WTC11 (cell line): ENCODE measurements at regions of chr16 and their contacts with region 1.

Region 1: DNA sequence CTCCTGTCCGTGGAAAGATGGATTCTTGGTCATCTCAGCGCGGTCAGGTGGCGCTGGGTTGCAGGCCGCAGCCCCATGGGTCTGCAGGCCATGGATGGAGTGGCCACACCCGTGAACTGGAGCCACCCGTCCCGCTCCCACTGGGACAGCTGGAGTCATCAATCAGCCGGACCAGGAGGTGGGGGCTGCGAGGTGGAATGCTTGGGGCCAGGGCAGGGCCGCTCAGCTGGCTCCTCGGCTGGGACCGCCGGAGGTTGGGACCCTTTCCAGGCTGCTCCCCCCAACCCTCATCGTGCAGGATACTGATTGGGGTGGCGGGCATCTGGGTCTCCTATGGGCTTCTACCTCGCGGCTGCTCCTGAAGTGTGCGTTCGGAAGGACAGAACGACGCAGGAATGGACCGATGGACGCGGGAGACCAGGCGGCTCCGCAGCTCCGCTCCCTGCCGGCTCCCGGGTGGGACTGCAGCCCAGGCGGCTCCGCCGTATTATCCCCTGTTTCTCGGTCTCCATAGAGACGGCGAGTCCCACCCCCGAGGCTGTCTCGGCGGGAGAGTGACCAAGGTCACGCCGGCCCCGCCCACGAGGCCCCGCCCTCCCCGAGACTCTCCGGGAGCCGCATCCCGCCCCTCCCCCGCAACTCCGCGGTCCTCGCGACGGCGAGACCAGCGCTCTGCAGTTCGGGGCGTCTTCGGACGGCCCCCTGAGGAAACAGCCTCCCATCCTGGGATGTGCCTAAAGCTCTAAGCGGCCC is at the start of gene TPPP3:
- DNase-seq: peak; percentile 90
- ATAC-seq: peak; percentile 56
- H3K4me3 Mint-ChIP-seq: peak within 1 kb of the TSS; percentile 66
- H3K27ac Mint-ChIP-seq: no peak within 1 kb of the TSS
- H3K4me1 Mint-ChIP-seq: peaks cover 20% of the 10 kb centered on the region
- H3K27me3 Mint-ChIP-seq: peaks cover 56% of the 10 kb centered on the region
- CTCF ChIP-seq: peak; percentile 25; the same call in 1 of the 2 replicates
- total RNA-seq, gene TPPP3: 0.57 to 0.74 TPM (median 0.64 TPM) in 3 replicates

Region 2: GRCh38 chr16:67372664-67373063 is 20.5 kb before region 1 on chr16:
- CTCF ChIA-PET with region 1: interaction called, 16 read pairs
- POLR2A ChIA-PET with region 1: no interaction called
- DNase-seq: no peak
- ATAC-seq: no peak
- H3K4me3 Mint-ChIP-seq: no peak overlapping the region
- H3K27ac Mint-ChIP-seq: no peak overlapping the region
- H3K4me1 Mint-ChIP-seq: no peaks in the 10 kb centered on the region
- H3K27me3 Mint-ChIP-seq: peaks cover 9% of the 10 kb centered on the region
- CTCF ChIP-seq: no peak

Region 3: GRCh38 chr16:67406111-67406890 is 13.1 kb after region 1 on chr16:
- CTCF ChIA-PET with region 1: interaction called, 36 read pairs
- POLR2A ChIA-PET with region 1: interaction called, 3 read pairs
- DNase-seq: no peak
- ATAC-seq: no peak
- H3K4me3 Mint-ChIP-seq: no peak overlapping the region
- H3K27ac Mint-ChIP-seq: no peak overlapping the region
- H3K4me1 Mint-ChIP-seq: peaks cover 39% of the 10 kb centered on the region
- H3K27me3 Mint-ChIP-seq: peaks cover 23% of the 10 kb centered on the region
- CTCF ChIP-seq: no peak

Region 4: GRCh38 chr16:67470359-67470758 is 77.1 kb after region 1 on chr16:
- CTCF ChIA-PET with region 1: interaction called, 14 read pairs
- POLR2A ChIA-PET with region 1: no interaction called
- DNase-seq: no peak
- ATAC-seq: no peak
- H3K4me3 Mint-ChIP-seq: no peak overlapping the region
- H3K27ac Mint-ChIP-seq: no peak overlapping the region
- H3K4me1 Mint-ChIP-seq: peaks cover 3% of the 10 kb centered on the region
- H3K27me3 Mint-ChIP-seq: no peaks in the 10 kb centered on the region; the same call in 1 of the 2 replicates
- CTCF ChIP-seq: no peak